ENCODE measurements at regions of chr7 and their contacts with region 1.

Region 1: GRCh38 chr7:20158684-20159083 is 58.5 kb downstream of the MACC1 start:
- DNase-seq: no peak
- CTCF ChIP-seq: peak; percentile 47

Region 2: DNA sequence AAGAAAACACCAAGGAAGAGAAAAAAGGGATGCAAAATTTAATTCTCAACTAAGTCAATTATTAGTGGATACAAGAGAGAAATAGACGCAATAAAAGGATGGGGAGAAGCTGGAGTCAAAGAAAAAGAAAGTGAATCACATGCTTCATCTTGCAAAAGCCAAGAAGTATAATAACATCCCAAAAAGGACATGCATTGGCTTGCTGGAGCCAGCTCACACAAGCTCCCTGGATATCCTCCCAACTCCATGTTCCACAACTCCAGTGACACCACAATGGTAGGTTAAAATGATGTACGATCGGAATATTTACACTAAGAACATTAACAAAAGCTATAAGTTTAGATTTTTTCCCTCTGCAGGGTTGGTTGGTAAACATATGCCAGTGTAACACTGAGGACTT is 13.9 kb before region 1 on chr7:
- CTCF ChIA-PET with region 1: interaction called, 14 read pairs
- POLR2A ChIA-PET with region 1: no interaction called
- DNase-seq: no peak
- CTCF ChIP-seq: no peak

Region 3: DNA sequence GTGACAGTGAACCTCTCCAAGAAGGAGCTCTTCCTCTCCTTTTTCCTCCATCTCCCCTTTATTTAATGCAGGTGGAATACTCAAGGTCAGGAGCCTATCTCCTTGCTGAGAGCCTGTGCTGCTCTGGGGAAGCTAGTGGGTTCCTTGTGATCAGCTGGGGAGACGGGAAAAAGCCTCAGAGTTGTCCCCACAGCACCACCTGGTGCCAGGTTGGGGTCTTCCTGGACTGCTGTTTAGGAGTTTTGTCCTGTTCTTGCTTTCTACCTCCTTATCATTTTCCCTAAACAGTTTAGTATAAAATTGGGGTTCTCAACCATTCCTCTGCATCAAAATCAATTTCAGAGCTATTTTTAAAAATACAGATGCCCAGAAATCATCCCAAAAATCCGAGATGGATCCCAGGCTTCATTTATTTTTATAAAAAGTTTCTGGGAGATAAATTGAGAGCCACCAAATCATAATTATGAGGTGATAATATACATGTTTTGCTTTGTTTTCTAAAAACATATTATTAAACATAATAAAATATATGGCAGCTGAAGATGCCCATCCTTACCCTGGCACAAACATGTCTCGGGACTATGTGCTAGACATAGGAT is 14.2 kb after region 1 on chr7:
- CTCF ChIA-PET with region 1: interaction called, 20 read pairs
- POLR2A ChIA-PET with region 1: no interaction called
- DNase-seq: peak; percentile 37
- CTCF ChIP-seq: peak; percentile 47

Region 4: GRCh38 chr7:20744948-20745587 is 586.4 kb after region 1 on chr7:
- CTCF ChIA-PET with region 1: no interaction called
- POLR2A ChIA-PET with region 1: no interaction called
- DNase-seq: no peak
- CTCF ChIP-seq: no peak